ENCODE measurements at regions of chr1 and their contacts with region 1.

Region 1: GRCh38 chr1:89632657-89633247 is at the start of gene LRRC8C:
- DNase-seq: peak; percentile 71
- ATAC-seq: peak; percentile 91
- H3K4me3 ChIP-seq: peak within 1 kb of the TSS; percentile 96
- H3K27ac ChIP-seq: peak within 1 kb of the TSS; percentile 91
- H3K4me1 ChIP-seq: peaks cover 12% of the 10 kb centered on the region
- H3K27me3 ChIP-seq: no peaks in the 10 kb centered on the region
- CTCF ChIP-seq: peak; percentile 81
- POLR2A ChIP-seq: peak; percentile 59
- RAD21 ChIP-seq: peak; percentile 72
- total RNA-seq, gene LRRC8C: 12.9 and 15.3 TPM in 2 replicates

Region 2: GRCh38 chr1:89605692-89606091 is 27.1 kb before region 1 on chr1:
- CTCF ChIA-PET with region 1: interaction called, 3 read pairs
- POLR2A ChIA-PET with region 1: no interaction called
- dilution Hi-C with region 1: no loop called
- in situ Hi-C with region 1: no loop called
- intact Hi-C with region 1: loop called (anchors 2 kb)
- DNase-seq: peak; percentile 55
- ATAC-seq: peak; percentile 38; the same call in 1 of the 2 replicates
- H3K4me3 ChIP-seq: no peak overlapping the region
- H3K27ac ChIP-seq: no peak overlapping the region
- H3K4me1 ChIP-seq: peaks cover 3% of the 10 kb centered on the region
- H3K27me3 ChIP-seq: no peaks in the 10 kb centered on the region
- CTCF ChIP-seq: no peak
- POLR2A ChIP-seq: no peak
- RAD21 ChIP-seq: no peak

Region 3: GRCh38 chr1:89719502-89720306 is 87.0 kb after region 1 on chr1:
- CTCF ChIA-PET with region 1: no interaction called
- POLR2A ChIA-PET with region 1: no interaction called
- dilution Hi-C with region 1: no loop called
- in situ Hi-C with region 1: no loop called
- intact Hi-C with region 1: loop called (anchors 5 kb)
- DNase-seq: peak; percentile 22
- ATAC-seq: peak; percentile 74
- H3K4me3 ChIP-seq: peak overlapping the region; percentile 24; the same call in 1 of the 2 replicates
- H3K27ac ChIP-seq: peak overlapping the region; percentile 70; the same call in 1 of the 2 replicates
- H3K4me1 ChIP-seq: peaks cover 7% of the 10 kb centered on the region
- H3K27me3 ChIP-seq: no peaks in the 10 kb centered on the region
- CTCF ChIP-seq: no peak
- POLR2A ChIP-seq: no peak
- RAD21 ChIP-seq: no peak

Region 4: GRCh38 chr1:89762779-89763648 is 130.3 kb after region 1 on chr1:
- CTCF ChIA-PET with region 1: interaction called, 35 read pairs
- POLR2A ChIA-PET with region 1: interaction called, 4 read pairs
- dilution Hi-C with region 1: no loop called
- in situ Hi-C with region 1: loop called (anchors 5 kb)
- intact Hi-C with region 1: loop called (anchors 1 kb)
- DNase-seq: peak; percentile 78
- ATAC-seq: peak; percentile 100
- H3K4me3 ChIP-seq: peak overlapping the region; percentile 56
- H3K27ac ChIP-seq: no peak overlapping the region; the same call in 1 of the 2 replicates
- H3K4me1 ChIP-seq: peaks cover 6% of the 10 kb centered on the region
- H3K27me3 ChIP-seq: no peaks in the 10 kb centered on the region
- CTCF ChIP-seq: peak; percentile 99
- POLR2A ChIP-seq: no peak
- RAD21 ChIP-seq: peak; percentile 98

Measured in IMR-90 (cell line).